Activated CD4-positive, alpha-beta memory T cell treated with anti-CD3 and anti-CD28 coated beads, Interleukin-2, amount 10 ng/mL, durations not matched to agents 7 days and 5 days (primary cell): ENCODE measurements at regions of chr12 and their contacts with region 1.

Region 1: DNA sequence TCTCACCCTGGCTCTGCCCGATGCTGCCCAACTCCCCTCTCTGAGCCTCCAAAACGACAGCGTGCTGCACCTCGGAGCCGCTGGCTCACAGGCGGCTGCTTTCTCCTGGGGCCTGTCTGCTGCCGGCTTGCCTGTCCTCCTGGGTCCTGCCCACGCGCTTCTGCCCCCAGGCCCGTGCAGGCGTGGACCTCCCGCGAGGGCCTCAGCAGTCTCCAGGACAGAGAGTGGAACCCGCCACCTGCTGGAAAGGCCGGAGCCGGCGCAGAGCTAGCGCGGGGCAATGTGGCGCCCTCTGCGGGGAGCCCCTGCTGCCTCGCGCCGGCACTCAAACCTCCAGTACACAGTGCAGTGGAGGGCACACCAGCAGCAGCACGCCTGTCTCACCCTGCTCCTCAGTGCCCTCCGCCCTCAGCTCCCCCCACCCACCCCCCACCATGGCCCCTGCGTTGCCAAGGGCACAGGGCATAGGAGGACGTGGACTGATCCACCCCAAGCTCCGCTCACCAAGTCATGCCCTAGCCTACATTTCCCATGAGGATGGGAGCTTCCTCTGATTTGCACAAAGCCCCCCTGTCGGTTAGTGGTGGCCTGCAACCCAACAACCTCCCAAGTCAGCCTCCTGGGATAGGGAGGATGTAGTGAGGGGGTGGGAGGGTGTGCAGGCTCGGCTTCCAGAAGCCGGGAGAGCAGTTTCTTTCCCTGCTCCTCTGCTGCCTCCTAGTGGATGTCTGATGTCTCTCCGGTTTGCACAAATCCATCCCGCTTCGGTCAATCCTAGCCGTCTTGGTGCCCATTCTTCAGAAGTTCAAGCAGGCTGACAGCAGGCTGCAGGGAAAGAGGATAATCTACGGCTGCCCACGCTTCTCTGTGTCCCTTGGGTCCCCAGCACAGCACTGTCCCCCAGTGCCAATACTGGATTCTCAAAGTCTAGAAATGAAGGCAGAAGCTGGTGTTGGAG is 25.2 kb downstream of the KRT8 start:
- DNase-seq: peak; percentile 81
- H3K4me3 Mint-ChIP-seq: peak overlapping the region; percentile 19
- H3K27ac Mint-ChIP-seq: no peak overlapping the region
- H3K4me1 Mint-ChIP-seq: peaks cover 14% of the 10 kb centered on the region
- H3K27me3 Mint-ChIP-seq: peaks cover 11% of the 10 kb centered on the region

Region 2: DNA sequence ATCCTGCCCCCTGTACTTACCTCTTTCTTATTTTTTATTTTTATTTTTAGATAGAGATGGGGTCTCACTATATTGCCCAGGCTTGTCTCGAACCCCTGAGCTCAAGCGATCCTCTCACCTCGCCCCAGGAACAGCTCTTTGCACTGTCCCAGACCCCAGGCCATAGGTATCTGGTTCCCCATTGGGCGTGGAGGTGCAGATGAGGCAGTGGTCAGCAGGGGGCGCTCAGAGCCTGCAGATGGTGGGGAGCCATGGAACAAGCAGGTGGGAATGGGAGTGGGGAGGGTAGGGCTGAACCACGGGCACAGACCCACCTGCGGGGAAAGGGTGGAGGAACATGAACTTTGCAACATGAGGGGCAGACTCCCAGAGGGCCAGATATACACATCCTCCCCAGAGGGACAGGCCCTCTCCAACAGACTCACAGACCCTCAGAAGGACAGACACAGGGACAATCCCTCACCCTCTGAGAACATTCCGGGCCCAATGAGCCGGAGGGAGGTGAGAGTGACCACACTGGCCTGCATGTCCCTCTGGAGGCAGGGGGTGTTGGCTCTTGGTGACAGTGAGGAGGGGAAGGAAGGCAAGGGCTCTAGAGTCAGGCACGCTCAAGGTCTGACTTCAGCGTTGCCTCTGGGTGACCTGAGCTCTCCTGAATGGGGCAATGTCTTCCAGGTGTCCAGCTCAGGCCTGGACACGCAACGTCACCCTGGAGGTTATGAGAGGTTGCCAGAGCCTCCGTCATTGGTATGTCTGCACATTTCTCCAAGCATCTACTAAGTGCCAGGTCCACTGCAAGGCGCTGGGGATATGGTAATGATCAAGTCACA is 722.7 kb before region 1 on chr12:
- CTCF ChIA-PET with region 1: interaction called, 32 read pairs
- POLR2A ChIA-PET with region 1: no interaction called
- DNase-seq: peak; percentile 80
- H3K4me3 Mint-ChIP-seq: no peak overlapping the region
- H3K27ac Mint-ChIP-seq: no peak overlapping the region
- H3K4me1 Mint-ChIP-seq: peaks cover 46% of the 10 kb centered on the region
- H3K27me3 Mint-ChIP-seq: no peaks in the 10 kb centered on the region

Region 3: GRCh38 chr12:52372216-52373154 is 507.2 kb before region 1 on chr12:
- CTCF ChIA-PET with region 1: interaction called, 17 read pairs
- POLR2A ChIA-PET with region 1: no interaction called
- DNase-seq: peak; percentile 66
- H3K4me3 Mint-ChIP-seq: no peak overlapping the region
- H3K27ac Mint-ChIP-seq: no peak overlapping the region
- H3K4me1 Mint-ChIP-seq: no peaks in the 10 kb centered on the region
- H3K27me3 Mint-ChIP-seq: peaks cover 32% of the 10 kb centered on the region

Region 4: DNA sequence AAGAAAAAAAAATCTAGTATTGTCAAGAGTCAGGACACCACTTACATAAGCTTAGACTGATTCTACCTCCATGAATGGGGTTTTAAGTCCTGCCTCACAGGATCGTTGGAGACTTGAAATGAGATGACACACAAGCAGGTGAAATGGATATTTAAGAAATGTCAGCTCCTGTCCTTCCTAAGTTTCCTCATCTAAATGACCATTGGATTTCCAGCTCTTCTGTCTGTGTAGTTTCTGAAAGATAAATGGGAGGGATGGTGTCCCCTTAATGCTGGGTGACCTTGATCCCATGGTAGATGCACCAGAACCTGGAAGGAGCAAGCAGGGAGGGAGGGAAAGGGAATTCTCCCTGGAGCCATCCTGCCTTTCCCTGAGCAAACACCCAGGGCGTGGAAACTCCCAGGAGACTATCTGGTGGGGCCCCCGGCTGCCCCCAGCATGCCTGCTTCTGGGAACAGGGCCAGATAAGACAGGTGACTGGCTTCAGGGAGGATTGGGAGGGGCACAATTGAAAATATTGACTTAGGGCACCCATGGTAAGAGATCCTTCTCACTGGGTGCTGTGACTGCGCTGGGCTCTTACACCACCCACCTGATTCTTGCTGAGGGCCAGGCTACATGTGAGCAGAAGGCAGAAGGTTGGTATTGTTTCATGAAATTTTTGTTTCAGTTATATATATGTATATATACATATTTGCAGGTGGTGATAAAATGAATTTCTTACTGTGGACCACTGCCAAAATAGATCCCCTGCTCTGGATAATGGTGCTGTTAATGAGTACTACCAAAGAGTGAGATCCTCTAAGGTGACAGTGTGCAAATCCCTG is 15.6 kb after region 1 on chr12:
- CTCF ChIA-PET with region 1: interaction called, 24 read pairs
- POLR2A ChIA-PET with region 1: no interaction called
- DNase-seq: no peak
- H3K4me3 Mint-ChIP-seq: no peak overlapping the region
- H3K27ac Mint-ChIP-seq: no peak overlapping the region
- H3K4me1 Mint-ChIP-seq: no peaks in the 10 kb centered on the region
- H3K27me3 Mint-ChIP-seq: peaks cover 5% of the 10 kb centered on the region

Region 5: DNA sequence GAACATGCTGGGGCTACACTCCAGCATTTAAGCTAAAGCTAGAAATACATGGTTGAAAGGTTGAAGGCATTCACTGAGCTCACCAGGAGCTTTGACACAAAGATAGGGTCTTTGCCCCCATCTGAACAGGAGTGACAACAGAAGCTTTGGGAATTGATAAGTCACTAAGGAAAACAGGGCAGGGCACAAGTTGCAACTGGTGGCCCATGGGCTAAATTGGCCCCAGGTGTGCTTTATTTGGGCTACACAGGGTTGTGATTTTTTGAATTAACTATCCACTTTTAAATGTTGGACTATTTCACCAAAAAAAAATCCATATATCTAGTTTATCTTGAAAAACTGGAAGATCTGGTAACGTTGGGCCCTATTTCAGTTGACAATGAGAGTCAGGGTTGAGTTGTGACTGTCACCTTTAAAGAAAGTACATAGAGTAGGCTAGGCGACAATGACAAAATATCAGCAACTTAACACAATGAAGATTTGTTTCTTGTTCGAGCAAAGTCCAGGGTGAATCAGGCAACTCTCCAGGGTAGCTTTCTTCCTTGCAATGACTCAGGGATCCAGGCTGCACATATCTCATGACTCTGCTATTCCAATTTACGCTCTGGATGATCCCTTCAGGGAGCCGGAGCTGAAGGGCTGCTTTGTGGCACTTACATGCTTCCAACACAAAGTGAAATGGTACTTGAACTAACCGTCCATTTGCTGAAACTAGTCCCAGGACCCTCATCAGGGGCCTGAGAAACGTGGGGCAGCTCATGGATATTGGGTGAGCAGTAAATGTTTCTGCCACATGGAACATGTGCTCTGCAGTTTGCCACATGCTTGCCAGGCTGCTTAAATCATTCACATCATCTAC is 113.3 kb after region 1 on chr12:
- CTCF ChIA-PET with region 1: interaction called, 318 read pairs
- POLR2A ChIA-PET with region 1: interaction called, 3 read pairs
- DNase-seq: no peak
- H3K4me3 Mint-ChIP-seq: no peak overlapping the region
- H3K27ac Mint-ChIP-seq: no peak overlapping the region
- H3K4me1 Mint-ChIP-seq: no peaks in the 10 kb centered on the region
- H3K27me3 Mint-ChIP-seq: peaks cover 4% of the 10 kb centered on the region

Region 6: DNA sequence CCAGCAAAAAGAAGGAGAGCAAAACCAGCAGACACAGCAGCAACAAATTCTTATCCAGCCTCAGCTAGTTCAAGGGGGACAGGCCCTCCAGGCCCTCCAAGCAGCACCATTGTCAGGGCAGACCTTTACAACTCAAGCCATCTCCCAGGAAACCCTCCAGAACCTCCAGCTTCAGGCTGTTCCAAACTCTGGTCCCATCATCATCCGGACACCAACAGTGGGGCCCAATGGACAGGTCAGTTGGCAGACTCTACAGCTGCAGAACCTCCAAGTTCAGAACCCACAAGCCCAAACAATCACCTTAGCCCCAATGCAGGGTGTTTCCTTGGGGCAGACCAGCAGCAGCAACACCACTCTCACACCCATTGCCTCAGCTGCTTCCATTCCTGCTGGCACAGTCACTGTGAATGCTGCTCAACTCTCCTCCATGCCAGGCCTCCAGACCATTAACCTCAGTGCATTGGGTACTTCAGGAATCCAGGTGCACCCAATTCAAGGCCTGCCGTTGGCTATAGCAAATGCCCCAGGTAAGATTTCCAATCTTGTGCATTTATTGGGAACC is 503.5 kb after region 1 on chr12:
- CTCF ChIA-PET with region 1: no interaction called
- POLR2A ChIA-PET with region 1: no interaction called
- DNase-seq: no peak
- H3K4me3 Mint-ChIP-seq: peak overlapping the region; percentile 47
- H3K27ac Mint-ChIP-seq: peak overlapping the region; percentile 86
- H3K4me1 Mint-ChIP-seq: peaks cover 55% of the 10 kb centered on the region
- H3K27me3 Mint-ChIP-seq: no peaks in the 10 kb centered on the region